ENCODE measurements at regions of chr3 and their contacts with region 1.

Region 1: DNA sequence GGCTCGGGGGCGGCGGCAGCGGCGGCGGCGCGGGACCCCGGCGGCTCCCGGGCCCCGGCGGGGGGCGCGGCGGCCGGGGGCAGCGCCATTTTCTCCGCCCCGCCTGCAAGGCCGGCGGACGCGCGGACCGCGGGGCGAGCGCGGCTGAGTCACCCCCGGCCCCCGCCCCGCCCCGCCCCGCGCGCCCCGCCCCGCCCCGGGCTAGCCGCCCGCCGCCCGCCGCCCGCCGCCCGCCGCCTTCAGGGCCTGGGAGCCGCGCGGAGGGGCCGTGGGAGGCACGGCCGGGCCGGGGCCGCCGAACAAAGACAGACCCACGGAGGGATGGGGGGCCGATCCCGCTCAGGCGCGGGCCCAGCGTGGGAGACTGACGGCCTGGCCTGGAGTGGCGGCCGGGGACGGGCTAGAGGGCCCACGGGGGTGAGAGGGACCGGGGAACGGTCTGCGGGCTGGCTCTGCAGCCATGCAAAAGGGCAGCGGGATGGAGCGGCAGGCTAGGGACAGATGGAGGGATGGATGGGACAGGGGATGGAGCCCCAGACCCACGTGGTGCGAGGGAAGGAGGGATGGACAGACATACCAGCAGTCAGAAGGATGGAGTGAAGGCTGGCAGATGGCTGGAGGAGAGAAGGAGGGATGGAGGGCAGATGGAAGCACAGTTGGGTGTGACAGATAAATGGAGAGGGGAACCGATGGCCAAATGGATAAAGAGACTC is at the start of gene EIF4E3:
- DNase-seq: peak; percentile 84
- H3K4me3 Mint-ChIP-seq: peak within 1 kb of the TSS; percentile 96
- H3K27ac Mint-ChIP-seq: peak within 1 kb of the TSS; percentile 94
- H3K4me1 Mint-ChIP-seq: peaks cover 71% of the 10 kb centered on the region
- H3K27me3 Mint-ChIP-seq: no peaks in the 10 kb centered on the region
- total RNA-seq, gene EIF4E3: 20.3 and 20.7 TPM in 2 replicates

Region 2: GRCh38 chr3:71710906-71711494 is 14.4 kb before region 1 on chr3:
- intact Hi-C with region 1: loop called (anchors 1 kb)
- DNase-seq: peak; percentile 70
- H3K4me3 Mint-ChIP-seq: no peak overlapping the region
- H3K27ac Mint-ChIP-seq: no peak overlapping the region
- H3K4me1 Mint-ChIP-seq: peaks cover 52% of the 10 kb centered on the region
- H3K27me3 Mint-ChIP-seq: no peaks in the 10 kb centered on the region

Region 3: GRCh38 chr3:71978150-71978721 is 252.8 kb after region 1 on chr3:
- intact Hi-C with region 1: loop called (anchors 5 kb)
- DNase-seq: peak; percentile 76
- H3K4me3 Mint-ChIP-seq: peak overlapping the region; percentile 59
- H3K27ac Mint-ChIP-seq: peak overlapping the region; percentile 88
- H3K4me1 Mint-ChIP-seq: peaks cover 45% of the 10 kb centered on the region
- H3K27me3 Mint-ChIP-seq: no peaks in the 10 kb centered on the region

Region 4: GRCh38 chr3:72426618-72427397 is 701.4 kb after region 1 on chr3:
- intact Hi-C with region 1: loop called (anchors 5 kb)
- DNase-seq: no peak
- H3K4me3 Mint-ChIP-seq: peak overlapping the region; percentile 55
- H3K27ac Mint-ChIP-seq: peak overlapping the region; percentile 90
- H3K4me1 Mint-ChIP-seq: peaks cover 59% of the 10 kb centered on the region
- H3K27me3 Mint-ChIP-seq: no peaks in the 10 kb centered on the region

Region 5: DNA sequence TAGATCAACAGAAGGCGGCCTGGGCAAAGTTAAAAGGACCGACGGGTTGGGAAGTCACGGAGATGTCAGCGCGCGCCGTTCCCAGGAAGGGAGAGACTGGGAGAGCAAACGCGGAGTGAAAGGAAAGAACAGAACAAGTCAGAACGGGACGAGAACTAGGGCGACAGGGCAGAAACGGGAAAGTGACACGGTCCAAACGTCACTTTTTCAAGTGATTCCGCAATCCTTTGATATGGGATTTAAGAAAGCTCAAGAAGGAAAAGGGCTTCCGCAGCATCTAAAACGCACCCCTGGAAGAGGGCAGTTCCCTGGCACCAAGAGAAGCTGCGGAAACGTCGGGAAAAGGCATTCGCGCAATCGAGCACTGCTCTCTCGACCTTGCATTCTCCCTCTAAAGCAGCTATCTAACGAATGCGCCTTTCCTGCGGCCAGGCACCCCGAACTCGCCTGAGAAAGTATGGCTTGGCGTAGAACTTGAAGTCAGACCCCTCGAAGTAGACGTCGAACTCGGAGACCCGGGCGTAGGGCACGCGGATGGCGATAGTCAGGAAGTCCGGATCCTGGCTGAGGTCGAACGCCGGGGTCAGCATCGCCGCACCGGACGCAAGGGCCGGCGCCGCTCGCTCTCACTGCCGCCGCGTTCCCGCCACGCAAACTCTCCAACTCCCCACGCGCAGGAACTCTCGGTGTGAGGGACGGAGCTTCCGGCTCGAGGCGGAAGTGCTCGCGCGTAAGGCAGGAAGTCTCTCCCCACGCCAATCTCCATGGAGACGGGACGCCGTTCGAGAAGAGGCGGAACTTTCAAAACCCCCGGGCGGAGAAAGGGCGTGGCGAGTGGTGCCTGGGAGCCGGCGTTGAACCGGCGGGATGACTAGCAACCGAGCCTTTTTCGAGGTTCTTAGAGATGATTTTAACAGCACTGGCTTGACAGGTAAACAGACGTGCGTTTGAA is 1122.6 kb after region 1 on chr3 and contains the start of gene SHQ1:
- intact Hi-C with region 1: loop called (anchors 5 kb)
- DNase-seq: peak; percentile 99
- H3K4me3 Mint-ChIP-seq: peak within 1 kb of the TSS; percentile 93
- H3K27ac Mint-ChIP-seq: peak within 1 kb of the TSS; percentile 91
- H3K4me1 Mint-ChIP-seq: peaks cover 41% of the 10 kb centered on the region
- H3K27me3 Mint-ChIP-seq: no peaks in the 10 kb centered on the region
- total RNA-seq, gene SHQ1: 46.8 and 47.2 TPM in 2 replicates